MCF 10A (cell line): ENCODE measurements at regions of chr10 and their contacts with region 1.

Region 1: DNA sequence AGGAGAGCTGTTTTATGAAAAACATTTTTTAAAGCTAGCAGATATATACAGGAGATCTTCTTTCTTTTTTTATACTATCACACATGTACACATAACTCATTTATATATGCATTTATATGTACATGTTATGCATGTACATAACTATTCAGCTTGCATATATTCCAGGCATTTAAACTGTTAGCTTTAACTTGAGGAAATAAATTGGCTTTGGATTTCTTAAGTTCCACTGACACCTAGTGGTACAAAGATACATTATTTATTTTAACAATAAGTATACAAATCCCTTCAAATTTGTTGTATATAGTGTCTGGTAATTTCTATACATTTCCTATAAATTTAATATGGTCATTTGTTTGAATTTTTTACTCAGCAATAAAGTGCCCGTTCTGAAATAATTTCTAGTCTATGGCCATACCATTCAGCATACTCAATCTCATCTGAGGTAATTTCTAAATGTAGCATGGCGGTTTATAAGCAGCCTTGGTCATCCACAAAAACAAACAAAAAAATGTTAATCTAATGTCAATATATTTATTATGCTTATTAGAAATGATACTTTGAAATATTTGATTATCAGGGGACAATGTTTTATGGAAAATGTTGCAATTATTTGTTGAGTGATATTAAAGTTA is 11.6 kb downstream of the ZDHHC6 start:
- DNase-seq: peak; percentile 45
- H3K4me3 Mint-ChIP-seq: no peak overlapping the region
- H3K27ac Mint-ChIP-seq: no peak overlapping the region
- H3K4me1 Mint-ChIP-seq: no peaks in the 10 kb centered on the region
- H3K27me3 Mint-ChIP-seq: no peaks in the 10 kb centered on the region
- CTCF ChIP-seq: peak; percentile 47

Region 2: DNA sequence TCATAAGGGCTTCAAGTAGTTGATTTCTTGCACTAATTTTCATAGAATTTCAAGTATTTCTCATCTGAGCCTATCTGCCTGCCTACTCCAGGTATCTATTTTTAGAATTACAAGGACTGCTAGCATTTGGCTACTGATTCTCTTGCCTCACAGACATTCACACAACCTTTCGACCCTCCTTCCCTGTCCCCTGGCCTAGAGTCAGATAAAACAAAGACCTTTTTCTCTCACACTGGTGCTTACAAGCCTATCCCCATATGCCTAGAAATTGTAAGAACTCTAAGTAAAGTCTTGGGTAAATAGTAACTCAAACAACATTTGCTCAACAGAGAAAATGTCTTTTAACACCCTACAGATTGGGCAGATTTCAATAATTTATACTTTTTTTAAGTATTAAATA is 257.9 kb before region 1 on chr10:
- CTCF ChIA-PET with region 1: interaction called, 25 read pairs
- POLR2A ChIA-PET with region 1: no interaction called
- intact Hi-C with region 1: loop called (anchors 10 kb)
- DNase-seq: no peak
- H3K4me3 Mint-ChIP-seq: no peak overlapping the region
- H3K27ac Mint-ChIP-seq: no peak overlapping the region
- H3K4me1 Mint-ChIP-seq: peaks cover 6% of the 10 kb centered on the region
- H3K27me3 Mint-ChIP-seq: no peaks in the 10 kb centered on the region
- CTCF ChIP-seq: no peak

Region 3: DNA sequence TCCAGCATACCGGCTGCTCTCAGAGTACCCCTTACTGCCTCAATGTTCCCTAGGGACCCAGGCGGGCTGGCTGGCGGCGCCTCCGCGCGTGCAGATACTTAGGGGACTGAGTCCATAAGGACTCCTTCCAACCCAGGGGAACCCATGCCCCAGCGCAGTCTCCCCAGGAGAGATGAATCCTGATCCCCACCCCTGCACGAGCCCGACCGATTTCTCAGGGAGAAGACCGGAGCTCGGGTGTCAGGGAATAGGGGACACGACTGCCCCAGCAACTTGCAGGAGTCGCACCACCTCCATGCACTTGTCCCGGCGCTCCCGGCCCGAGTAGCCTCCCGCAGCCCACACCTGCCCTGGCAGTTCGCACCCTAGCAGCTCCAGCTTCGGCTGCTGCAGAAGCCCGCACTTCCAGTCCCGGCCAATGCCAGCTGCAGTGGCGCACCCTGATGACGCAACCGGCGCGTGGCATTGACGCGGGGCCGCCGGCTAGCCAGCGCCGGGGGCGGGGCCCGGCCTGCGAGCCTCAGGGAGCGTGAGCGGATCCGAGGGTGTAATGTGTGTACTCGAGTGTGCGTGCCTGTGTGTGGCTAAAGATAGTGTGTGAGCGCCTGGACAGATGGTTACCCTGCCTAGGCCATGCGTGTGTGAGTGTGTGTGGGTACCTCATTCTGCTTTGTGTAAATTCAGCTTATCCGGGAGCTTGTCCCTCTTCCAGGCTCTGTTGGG is 251.6 kb before region 1 on chr10 and contains the start of gene GPAM:
- CTCF ChIA-PET with region 1: interaction called, 25 read pairs
- POLR2A ChIA-PET with region 1: interaction called, 5 read pairs
- intact Hi-C with region 1: loop called (anchors 10 kb)
- DNase-seq: peak; percentile 87
- H3K4me3 Mint-ChIP-seq: peak within 1 kb of the TSS; percentile 98
- H3K27ac Mint-ChIP-seq: peak within 1 kb of the TSS; percentile 94
- H3K4me1 Mint-ChIP-seq: peaks cover 19% of the 10 kb centered on the region
- H3K27me3 Mint-ChIP-seq: no peaks in the 10 kb centered on the region
- CTCF ChIP-seq: no peak
- total RNA-seq, gene GPAM: 19.8 and 20.4 TPM in 2 replicates

Region 4: DNA sequence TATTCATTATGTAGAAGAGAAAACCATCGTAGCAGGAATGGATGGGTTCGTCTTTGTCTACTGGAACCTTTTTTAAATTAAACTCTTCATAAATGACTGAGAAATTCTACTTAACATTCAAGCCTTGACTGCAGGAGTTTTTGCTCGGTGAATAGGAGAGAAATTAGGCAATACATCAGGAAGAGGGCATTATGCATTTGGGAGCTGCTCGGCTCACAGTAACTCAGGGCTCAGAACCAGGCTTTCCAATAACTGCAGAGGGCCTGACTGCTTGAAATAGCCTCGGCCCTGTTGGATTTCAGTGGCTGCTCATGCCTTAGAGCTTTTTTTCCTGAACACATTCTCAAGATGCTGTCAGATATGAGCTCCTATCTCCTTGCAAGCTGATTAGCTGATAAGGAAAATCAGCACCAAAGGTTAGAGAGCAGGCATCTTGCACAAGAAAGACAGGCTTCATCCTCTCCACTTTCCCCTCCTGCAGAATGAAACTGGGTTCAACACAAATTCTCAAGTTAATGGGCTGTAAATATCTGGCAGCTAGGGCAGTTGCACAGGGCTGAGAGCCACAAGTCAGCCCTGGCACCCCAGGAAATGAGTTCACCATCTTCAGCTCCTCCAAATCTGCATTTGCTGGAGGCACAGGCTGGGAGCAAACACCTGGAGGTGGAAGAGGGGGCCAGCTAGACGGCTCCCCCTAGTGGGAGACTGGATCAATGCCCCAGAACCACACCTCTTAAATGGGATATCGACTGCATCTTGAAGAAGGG is 127.6 kb before region 1 on chr10:
- CTCF ChIA-PET with region 1: interaction called, 30 read pairs
- POLR2A ChIA-PET with region 1: no interaction called
- intact Hi-C with region 1: no loop called
- DNase-seq: peak; percentile 74
- H3K4me3 Mint-ChIP-seq: no peak overlapping the region
- H3K27ac Mint-ChIP-seq: no peak overlapping the region
- H3K4me1 Mint-ChIP-seq: peaks cover 14% of the 10 kb centered on the region
- H3K27me3 Mint-ChIP-seq: no peaks in the 10 kb centered on the region
- CTCF ChIP-seq: peak; percentile 73

Region 5: GRCh38 chr10:112361951-112362751 is 73.0 kb before region 1 on chr10:
- CTCF ChIA-PET with region 1: interaction called, 8 read pairs
- POLR2A ChIA-PET with region 1: interaction called, 17 read pairs
- intact Hi-C with region 1: no loop called
- DNase-seq: peak; percentile 93
- H3K4me3 Mint-ChIP-seq: peak overlapping the region; percentile 38
- H3K27ac Mint-ChIP-seq: peak overlapping the region; percentile 90
- H3K4me1 Mint-ChIP-seq: peaks cover 37% of the 10 kb centered on the region
- H3K27me3 Mint-ChIP-seq: no peaks in the 10 kb centered on the region
- CTCF ChIP-seq: no peak

Region 6: GRCh38 chr10:112421479-112422130 is 13.5 kb before region 1 on chr10:
- CTCF ChIA-PET with region 1: interaction called, 17 read pairs
- POLR2A ChIA-PET with region 1: interaction called, 3 read pairs
- intact Hi-C with region 1: no loop called
- DNase-seq: no peak
- H3K4me3 Mint-ChIP-seq: no peak overlapping the region
- H3K27ac Mint-ChIP-seq: no peak overlapping the region
- H3K4me1 Mint-ChIP-seq: no peaks in the 10 kb centered on the region
- H3K27me3 Mint-ChIP-seq: no peaks in the 10 kb centered on the region
- CTCF ChIP-seq: no peak

Region 7: DNA sequence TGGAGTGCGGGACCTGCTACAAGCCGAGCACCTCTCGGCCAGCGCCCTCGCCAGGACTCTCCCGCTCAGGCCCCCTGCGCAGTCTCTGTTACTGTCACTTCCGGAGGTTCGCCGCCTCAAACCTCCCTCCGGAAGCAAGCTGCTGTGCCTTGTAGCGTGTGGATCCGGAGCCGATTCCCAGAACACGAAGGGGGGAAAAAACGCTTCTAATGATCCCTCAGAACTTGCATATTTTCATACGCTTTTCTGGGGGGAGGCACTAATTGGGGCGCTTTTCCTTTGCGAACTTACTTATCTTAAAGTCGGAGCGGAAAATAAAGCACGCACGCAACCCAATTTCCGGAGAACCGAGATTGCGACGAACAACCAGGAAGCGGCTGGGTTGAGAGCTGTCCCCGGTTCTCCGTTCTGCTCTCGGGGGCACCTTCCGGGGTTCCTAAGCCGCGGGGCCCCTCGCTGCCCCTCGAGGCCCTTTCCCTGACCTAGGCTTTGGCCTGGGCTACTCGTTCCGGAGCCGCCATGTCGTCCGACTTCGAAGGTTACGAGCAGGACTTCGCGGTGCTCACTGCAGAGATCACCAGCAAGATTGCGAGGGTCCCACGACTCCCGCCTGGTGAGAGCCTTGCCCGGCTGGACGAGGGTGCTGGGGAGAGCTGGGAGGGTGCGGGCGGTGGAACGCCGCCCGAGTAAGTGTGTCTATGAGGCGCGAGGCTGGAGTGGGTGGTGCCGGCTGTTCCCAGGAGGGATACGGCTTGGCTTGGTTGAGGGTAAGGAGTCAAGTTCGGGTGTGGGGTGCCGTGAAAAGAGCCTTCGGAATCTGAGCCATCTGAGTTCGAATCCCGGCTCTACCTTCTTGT is 12.0 kb after region 1 on chr10 and contains the starts of genes VTI1A and ZDHHC6:
- CTCF ChIA-PET with region 1: interaction called, 8 read pairs
- POLR2A ChIA-PET with region 1: interaction called, 26 read pairs
- intact Hi-C with region 1: no loop called
- DNase-seq: peak; percentile 85
- H3K4me3 Mint-ChIP-seq: peak within 1 kb of the TSS; percentile 95
- H3K27ac Mint-ChIP-seq: peak within 1 kb of the TSS; percentile 88
- H3K4me1 Mint-ChIP-seq: peaks cover 16% of the 10 kb centered on the region
- H3K27me3 Mint-ChIP-seq: no peaks in the 10 kb centered on the region
- CTCF ChIP-seq: no peak
- total RNA-seq, gene VTI1A: 44.4 and 58.1 TPM in 2 replicates
- total RNA-seq, gene ZDHHC6: 25.9 and 26.3 TPM in 2 replicates